ENCODE measurements at regions of chr2 and their contacts with region 1.

Region 1: DNA sequence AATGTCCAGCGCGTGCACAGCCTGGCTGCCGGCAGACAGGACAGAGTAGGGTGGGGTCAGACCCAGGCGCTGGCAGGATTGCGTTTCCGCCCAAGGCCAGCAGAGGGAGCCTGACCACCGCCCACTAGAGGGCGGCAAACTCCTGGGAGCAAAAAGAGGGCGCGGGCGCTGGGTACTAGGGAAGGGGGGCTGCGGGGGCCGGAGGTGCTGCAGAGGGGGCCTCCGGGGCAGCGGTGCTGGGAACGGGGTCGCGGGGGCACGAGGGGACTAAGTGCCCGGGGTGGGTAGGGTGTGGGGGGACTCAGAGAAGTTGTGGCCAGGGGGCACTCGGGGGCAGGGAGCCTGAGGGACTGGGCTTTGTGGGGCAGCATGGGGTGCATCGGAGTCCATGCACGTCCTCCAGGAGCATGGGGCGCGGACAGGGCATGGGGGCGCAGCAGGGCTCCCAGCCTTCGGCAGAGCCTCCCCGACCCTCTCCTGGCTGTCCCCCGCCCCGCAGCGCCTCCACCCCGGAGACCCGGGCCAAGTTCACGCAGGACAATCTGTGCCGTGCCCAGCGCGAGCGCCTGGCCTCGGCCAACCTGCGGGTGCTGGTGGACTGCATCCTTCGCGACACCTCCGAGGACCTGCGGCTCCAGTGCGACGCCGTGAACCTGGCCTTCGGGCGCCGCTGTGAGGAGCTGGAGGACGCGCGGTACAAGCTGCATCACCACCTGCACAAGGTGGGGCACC is 3.2 kb downstream of the TEKT4 start:
- DNase-seq: peak; percentile 70 to 89 (median 85)
- ATAC-seq: peak; percentile 99
- H3K4me3 ChIP-seq: no peak overlapping the region
- H3K27ac ChIP-seq: no peak overlapping the region
- H3K4me1 ChIP-seq: peaks cover 0 to 24% of the 10 kb centered on the region in 2 experiments; a peak in 2 of 5 replicates
- H3K27me3 ChIP-seq: peaks cover 0 to 5% of the 10 kb centered on the region in 2 experiments; a peak in 2 of 5 replicates
- CTCF ChIP-seq: peak; percentile 85 to 100 (median 100)
- EP300 ChIP-seq: no peak
- POLR2A ChIP-seq: no peak
- RAD21 ChIP-seq: peak in 1 of 2 experiments; percentile 53; a peak in 3 of 4 replicates

Region 2: GRCh38 chr2:94759204-94759603 is 115.2 kb before region 1 on chr2:
- CTCF ChIA-PET with region 1: no interaction called
- POLR2A ChIA-PET with region 1: no interaction called
- in situ Hi-C with region 1: no loop called
- intact Hi-C with region 1: loop called (anchors 5 kb)
- DNase-seq: peak; percentile 24 to 60 (median 36)
- ATAC-seq: peak; percentile 72
- H3K4me3 ChIP-seq: no peak overlapping the region
- H3K27ac ChIP-seq: no peak overlapping the region
- H3K4me1 ChIP-seq: no peaks in the 10 kb centered on the region
- H3K27me3 ChIP-seq: no peaks in the 10 kb centered on the region
- CTCF ChIP-seq: peak in 2 of 3 experiments; percentile 33 to 74; a peak in 4 of 6 replicates
- EP300 ChIP-seq: no peak
- POLR2A ChIP-seq: no peak
- RAD21 ChIP-seq: no peak

Region 3: DNA sequence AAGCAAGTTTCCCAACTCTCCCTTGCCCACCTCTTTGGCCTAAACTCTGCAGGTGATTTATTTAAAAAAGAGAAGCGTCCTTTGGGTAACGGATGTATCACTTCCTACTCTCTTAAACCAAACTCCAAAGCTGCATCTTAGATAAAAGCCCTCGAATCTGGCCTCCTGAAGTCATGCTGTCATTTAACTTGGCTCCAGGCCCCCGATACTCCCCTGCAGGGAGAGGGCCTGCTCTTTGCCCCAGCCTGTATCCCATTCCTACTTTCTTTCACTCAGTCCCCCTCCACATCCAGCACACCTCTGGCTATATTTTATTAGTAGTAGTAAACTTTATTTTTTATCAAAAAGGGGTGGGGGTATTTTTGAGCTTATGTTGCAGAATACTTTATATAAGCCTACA is 15.8 kb after region 1 on chr2:
- CTCF ChIA-PET with region 1: no interaction called
- POLR2A ChIA-PET with region 1: no interaction called
- in situ Hi-C with region 1: no loop called
- intact Hi-C with region 1: no loop called
- DNase-seq: no peak
- ATAC-seq: no peak
- H3K4me3 ChIP-seq: no peak overlapping the region
- H3K27ac ChIP-seq: no peak overlapping the region
- H3K4me1 ChIP-seq: no peaks in the 10 kb centered on the region
- H3K27me3 ChIP-seq: no peaks in the 10 kb centered on the region; a peak in 1 of 5 replicates
- CTCF ChIP-seq: no peak
- EP300 ChIP-seq: no peak
- POLR2A ChIP-seq: no peak
- RAD21 ChIP-seq: no peak

Region 4: DNA sequence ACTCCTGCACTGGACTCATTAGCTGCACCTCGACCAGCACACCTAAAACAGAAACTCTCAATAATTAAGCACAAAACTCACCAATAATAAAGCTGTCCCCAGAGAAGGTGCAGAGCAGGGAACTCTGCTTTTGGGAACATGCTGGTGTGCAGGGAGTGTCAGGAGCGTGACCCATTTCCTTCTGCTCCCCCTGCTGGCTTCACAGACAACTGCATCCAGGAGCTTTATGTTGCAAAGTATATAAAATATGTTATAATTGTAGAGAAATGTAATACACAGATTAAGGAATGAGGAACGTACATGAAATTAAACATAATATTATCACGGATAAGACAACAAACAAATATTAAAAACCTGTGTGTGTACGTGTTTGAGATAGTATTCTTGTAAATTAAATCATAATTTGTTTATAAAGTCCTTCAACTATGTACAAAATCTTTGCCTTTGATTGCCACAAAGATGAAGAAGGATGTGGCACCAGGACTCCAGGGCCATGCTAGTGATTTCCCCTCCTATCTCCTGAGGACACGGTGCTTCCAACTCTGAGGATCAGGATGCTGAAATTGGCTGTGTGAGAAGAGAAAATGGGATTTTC is 82.5 kb after region 1 on chr2:
- CTCF ChIA-PET with region 1: no interaction called
- POLR2A ChIA-PET with region 1: no interaction called
- in situ Hi-C with region 1: no loop called
- intact Hi-C with region 1: loop called (anchors 5 kb)
- DNase-seq: peak; percentile 44 to 64 (median 58)
- ATAC-seq: peak; percentile 83
- H3K4me3 ChIP-seq: no peak overlapping the region
- H3K27ac ChIP-seq: no peak overlapping the region
- H3K4me1 ChIP-seq: no peaks in the 10 kb centered on the region
- H3K27me3 ChIP-seq: peaks cover 5% of the 10 kb centered on the region in 2 experiments; a peak in 4 of 5 replicates
- CTCF ChIP-seq: peak; percentile 68 to 81 (median 70)
- EP300 ChIP-seq: no peak
- POLR2A ChIP-seq: no peak
- RAD21 ChIP-seq: peak in 1 of 2 experiments; percentile 43; a peak in 3 of 4 replicates

Region 5: GRCh38 chr2:94980406-94980805 is 106.0 kb after region 1 on chr2:
- CTCF ChIA-PET with region 1: no interaction called
- POLR2A ChIA-PET with region 1: no interaction called
- in situ Hi-C with region 1: no loop called
- intact Hi-C with region 1: no loop called
- DNase-seq: no peak
- ATAC-seq: no peak
- H3K4me3 ChIP-seq: no peak overlapping the region
- H3K27ac ChIP-seq: no peak overlapping the region
- H3K4me1 ChIP-seq: no peaks in the 10 kb centered on the region
- H3K27me3 ChIP-seq: peaks cover 0 to 24% of the 10 kb centered on the region in 2 experiments; a peak in 3 of 5 replicates
- CTCF ChIP-seq: no peak
- EP300 ChIP-seq: no peak
- POLR2A ChIP-seq: no peak
- RAD21 ChIP-seq: no peak

Region 6: GRCh38 chr2:95043300-95044093 is 169.1 kb after region 1 on chr2:
- CTCF ChIA-PET with region 1: no interaction called
- POLR2A ChIA-PET with region 1: no interaction called
- in situ Hi-C with region 1: no loop called
- intact Hi-C with region 1: loop called (anchors 5 kb)
- DNase-seq: no peak
- ATAC-seq: no peak
- H3K4me3 ChIP-seq: no peak overlapping the region
- H3K27ac ChIP-seq: no peak overlapping the region
- H3K4me1 ChIP-seq: no peaks in the 10 kb centered on the region
- H3K27me3 ChIP-seq: peaks cover 6 to 50% of the 10 kb centered on the region in 2 experiments; a peak in 3 of 5 replicates
- CTCF ChIP-seq: no peak
- EP300 ChIP-seq: no peak
- POLR2A ChIP-seq: no peak
- RAD21 ChIP-seq: no peak

Region 7: DNA sequence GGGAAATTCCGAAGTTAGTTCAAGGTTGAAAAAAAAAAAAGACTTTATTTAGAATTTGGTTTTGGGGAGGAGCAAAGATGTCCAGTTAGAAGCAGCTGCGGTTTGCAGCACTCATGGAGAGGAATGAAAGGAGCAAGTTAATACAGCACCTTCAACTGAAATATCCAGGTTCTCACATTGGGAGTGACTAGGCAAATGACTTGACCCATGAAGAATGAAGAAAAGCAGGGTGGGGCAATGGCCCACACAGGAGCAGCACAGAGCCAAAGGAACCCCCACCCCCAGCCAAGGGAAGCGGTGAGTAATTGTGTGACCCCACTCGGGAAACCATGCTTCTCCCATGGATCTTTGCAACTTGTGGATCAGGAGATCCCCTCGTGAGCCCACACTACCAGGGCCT is 365.6 kb after region 1 on chr2:
- CTCF ChIA-PET with region 1: no interaction called
- POLR2A ChIA-PET with region 1: no interaction called
- in situ Hi-C with region 1: no loop called
- intact Hi-C with region 1: no loop called
- DNase-seq: no peak
- ATAC-seq: no peak
- H3K4me3 ChIP-seq: no peak overlapping the region
- H3K27ac ChIP-seq: no peak overlapping the region
- H3K4me1 ChIP-seq: no peaks in the 10 kb centered on the region
- H3K27me3 ChIP-seq: no peaks in the 10 kb centered on the region; a peak in 1 of 5 replicates
- CTCF ChIP-seq: no peak
- EP300 ChIP-seq: no peak
- POLR2A ChIP-seq: no peak
- RAD21 ChIP-seq: no peak

Measured in K562 (cell line).